Right lobe of liver (tissue), 6 donors: ENCODE measurements at regions of chr1 and their contacts with region 1.

Region 1: DNA sequence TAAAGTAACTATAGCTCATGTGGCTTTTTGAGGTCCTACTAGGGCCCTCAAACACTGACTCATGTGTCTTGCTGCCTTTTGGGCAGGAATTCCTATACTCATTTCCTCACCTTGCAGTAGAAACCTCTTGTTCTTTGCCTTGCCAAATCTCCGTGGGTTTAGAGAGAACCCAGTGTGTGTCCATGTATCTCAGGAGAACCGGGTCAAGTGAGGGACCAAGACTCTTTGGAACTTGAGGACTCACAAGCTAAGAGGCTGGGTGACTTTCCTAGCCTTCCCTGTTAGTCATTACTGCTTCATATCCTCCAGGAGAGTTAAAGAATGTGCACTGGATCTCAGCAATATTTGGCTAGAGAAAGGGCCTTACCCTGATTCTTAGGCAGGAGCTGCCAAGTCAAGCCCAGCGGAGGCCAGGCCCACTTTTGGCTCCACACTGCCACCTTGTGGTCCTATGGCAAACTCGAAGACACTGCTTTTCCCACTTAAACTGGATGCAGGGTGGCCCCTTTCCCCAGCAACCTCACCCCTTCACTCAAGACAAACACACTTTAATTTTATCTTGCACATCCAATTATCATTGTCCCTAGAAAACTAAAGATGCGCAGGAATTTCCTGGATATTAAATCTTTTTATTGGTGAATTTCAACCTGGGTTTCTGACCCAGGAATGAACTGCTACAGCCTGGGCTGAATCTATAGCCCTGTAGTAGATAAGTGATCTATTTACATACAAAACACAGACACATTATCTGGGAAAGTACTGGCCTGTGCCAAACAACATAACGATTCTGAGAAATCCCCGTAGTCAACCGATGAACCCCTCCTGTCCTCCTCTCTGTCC is 10.6 kb downstream of the AVPR1B start:
- DNase-seq: peak; percentile 70 to 80 (median 79)
- ATAC-seq: peak; percentile 90 to 95 (median 94)
- H3K4me3 ChIP-seq: no peak overlapping the region
- H3K27ac ChIP-seq: no peak overlapping the region
- H3K4me1 ChIP-seq: no peaks in the 10 kb centered on the region
- H3K27me3 ChIP-seq: no peaks in the 10 kb centered on the region
- CTCF ChIP-seq: peak; percentile 80 to 91 (median 86)
- POLR2A ChIP-seq: no peak

Region 2: DNA sequence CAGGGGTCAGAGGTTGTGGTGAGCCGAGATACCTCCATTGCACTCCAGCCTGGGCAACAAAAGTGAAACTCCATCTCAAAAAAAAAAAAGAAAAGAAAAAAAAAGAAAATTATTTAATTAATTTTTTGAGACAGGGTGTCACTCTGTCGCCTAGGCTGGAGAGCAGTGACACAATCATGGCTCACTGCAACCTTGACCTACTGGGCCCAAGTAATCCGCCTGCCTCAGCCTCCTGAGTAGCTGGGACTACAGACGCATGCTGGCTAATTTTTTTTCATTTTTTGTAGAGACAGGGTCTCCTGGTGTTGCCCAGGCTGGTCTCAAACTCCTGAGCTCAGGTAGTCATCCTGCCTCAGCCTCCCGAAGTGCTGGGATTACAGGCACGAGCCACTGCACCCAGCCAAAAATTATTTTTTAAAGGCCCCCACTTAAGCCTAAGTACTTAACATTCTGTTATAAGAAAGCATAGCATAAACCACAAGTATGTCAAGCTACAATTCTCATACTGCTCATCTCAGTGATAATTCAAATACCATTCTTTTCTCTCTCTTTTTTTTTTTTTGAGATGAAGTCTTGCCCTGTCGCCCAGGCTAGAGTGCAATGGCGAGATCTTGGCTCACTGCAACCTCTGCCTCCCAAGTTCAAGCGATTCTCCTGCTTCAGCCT is 376.5 kb before region 1 on chr1:
- intact Hi-C with region 1: no loop called
- DNase-seq: no peak
- ATAC-seq: peak; percentile 37 to 53 (median 47)
- H3K4me3 ChIP-seq: no peak overlapping the region
- H3K27ac ChIP-seq: peak overlapping the region; percentile 67 to 87 (median 85)
- H3K4me1 ChIP-seq: peaks cover 0 to 61% (median 17%) of the 10 kb centered on the region in 4 donors
- H3K27me3 ChIP-seq: no peaks in the 10 kb centered on the region
- CTCF ChIP-seq: no peak
- POLR2A ChIP-seq: no peak

Region 3: DNA sequence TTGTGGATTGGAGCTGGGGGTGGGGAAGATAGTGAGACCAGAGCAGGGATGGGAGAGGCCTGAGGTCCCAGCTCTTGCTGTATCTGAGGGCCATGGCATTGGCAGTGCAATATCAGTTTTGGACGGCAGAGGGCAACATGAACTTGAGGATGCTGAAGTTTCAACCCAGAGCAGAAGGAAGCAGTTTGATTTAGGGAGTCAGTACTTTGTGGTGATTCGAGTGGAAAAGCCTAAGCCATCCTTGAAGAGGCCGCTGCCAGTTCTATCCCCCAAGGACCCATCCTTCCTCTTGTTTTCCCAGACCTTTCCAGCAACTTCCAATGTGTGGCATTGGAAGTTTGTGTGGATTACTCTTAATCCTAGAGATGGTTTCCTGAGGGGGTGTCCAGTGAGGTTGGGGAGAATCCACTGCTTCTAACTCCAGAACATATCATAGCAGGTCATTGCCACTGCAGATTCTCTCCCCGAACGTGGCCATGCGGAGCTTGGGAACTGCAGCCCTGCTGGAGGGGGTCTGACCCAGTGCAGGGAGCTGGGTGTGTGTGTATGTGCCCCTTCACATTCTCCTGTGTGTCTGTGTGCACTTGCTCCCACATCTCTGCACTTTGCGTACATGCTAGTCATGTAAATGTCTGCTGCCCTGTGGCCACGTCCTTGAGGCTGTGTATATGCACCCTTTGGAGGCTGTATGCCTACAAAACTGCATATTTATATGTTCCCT is 187.4 kb before region 1 on chr1:
- intact Hi-C with region 1: loop called in 1 of 2 experiments (anchors 10 kb)
- DNase-seq: peak; percentile 66 to 71 (median 69)
- ATAC-seq: peak; percentile 88 to 97 (median 92)
- H3K4me3 ChIP-seq: no peak overlapping the region
- H3K27ac ChIP-seq: no peak overlapping the region
- H3K4me1 ChIP-seq: no peaks in the 10 kb centered on the region
- H3K27me3 ChIP-seq: no peaks in the 10 kb centered on the region
- CTCF ChIP-seq: peak; percentile 85 to 90 (median 89)
- POLR2A ChIP-seq: no peak

Region 4: DNA sequence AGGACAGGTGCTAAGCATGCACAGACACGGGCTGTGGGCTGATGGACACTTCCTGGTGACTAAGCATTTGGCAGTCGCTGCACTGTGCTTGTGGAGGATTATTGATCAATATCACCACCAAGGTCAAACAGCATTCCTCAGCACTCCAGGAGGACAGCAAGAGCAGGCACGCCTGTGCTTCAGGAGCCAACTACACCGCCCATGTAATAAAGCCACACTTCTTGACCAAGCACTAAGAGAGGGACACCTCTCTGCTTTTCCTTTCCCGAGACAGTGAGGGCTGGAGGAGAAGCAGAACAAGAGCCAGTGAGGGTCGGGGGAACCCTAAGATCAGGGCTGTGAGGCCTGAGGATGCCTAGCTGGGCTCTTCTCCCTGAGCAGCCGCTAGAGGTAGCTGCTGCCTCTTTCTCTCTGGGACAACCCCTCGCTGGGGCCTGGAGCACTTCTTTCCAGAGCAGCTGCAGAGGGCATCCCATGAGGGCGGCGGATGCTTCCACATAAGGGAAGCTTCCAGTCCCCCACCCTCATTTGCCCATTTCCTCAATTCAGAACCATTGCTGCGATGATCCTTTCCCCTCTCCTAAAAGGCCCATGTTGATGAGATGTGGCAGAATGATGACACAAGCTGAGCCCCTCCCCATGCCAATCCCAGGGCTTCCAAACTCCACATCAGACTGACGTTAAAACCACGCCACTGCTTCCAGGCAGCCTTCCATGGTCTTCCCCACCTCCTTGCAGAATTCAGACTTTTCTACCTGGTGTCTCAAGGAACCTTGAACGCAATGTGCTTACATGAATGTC is 122.4 kb before region 1 on chr1:
- intact Hi-C with region 1: loop called (anchors 5 kb)
- DNase-seq: peak; percentile 65 to 71 (median 69)
- ATAC-seq: peak; percentile 84 to 91 (median 88)
- H3K4me3 ChIP-seq: no peak overlapping the region
- H3K27ac ChIP-seq: no peak overlapping the region
- H3K4me1 ChIP-seq: peaks cover 0 to 8% (median 0%) of the 10 kb centered on the region in 4 donors
- H3K27me3 ChIP-seq: no peaks in the 10 kb centered on the region
- CTCF ChIP-seq: peak; percentile 63 to 82 (median 73)
- POLR2A ChIP-seq: no peak

Region 5: GRCh38 chr1:206030714-206031113 is 75.8 kb before region 1 on chr1:
- intact Hi-C with region 1: loop called (anchors 10 kb)
- DNase-seq: peak; percentile 79 to 82 (median 80)
- ATAC-seq: peak; percentile 92 to 96 (median 95)
- H3K4me3 ChIP-seq: no peak overlapping the region
- H3K27ac ChIP-seq: no peak overlapping the region
- H3K4me1 ChIP-seq: peaks cover 0 to 10% (median 3%) of the 10 kb centered on the region in 4 donors
- H3K27me3 ChIP-seq: no peaks in the 10 kb centered on the region
- CTCF ChIP-seq: peak; percentile 78 to 89 (median 86)
- POLR2A ChIP-seq: no peak